Mucosa of descending colon (tissue), 3 donors: ENCODE measurements at regions of chr5 and their contacts with region 1.

Region 1: GRCh38 chr5:90932052-90932699 is 373.6 kb downstream of the ADGRV1 start:
- DNase-seq: peak in 1 of 3 donors; percentile 78
- ATAC-seq: peak; percentile 81
- H3K4me3 ChIP-seq: no peak overlapping the region
- H3K4me1 ChIP-seq: no peaks in the 10 kb centered on the region
- CTCF ChIP-seq: peak; percentile 29

Region 2: GRCh38 chr5:91024727-91025126 is 92.6 kb after region 1 on chr5:
- intact Hi-C with region 1: loop called in 1 of 2 experiments (anchors 10 kb)
- DNase-seq: no peak
- ATAC-seq: no peak
- H3K4me3 ChIP-seq: no peak overlapping the region
- H3K4me1 ChIP-seq: peaks cover 18% of the 10 kb centered on the region
- CTCF ChIP-seq: no peak

Region 3: GRCh38 chr5:91101600-91102379 is 169.6 kb after region 1 on chr5:
- intact Hi-C with region 1: loop called in 1 of 2 experiments (anchors 5 kb)
- DNase-seq: peak; percentile 54 to 80 (median 67)
- ATAC-seq: peak; percentile 95
- H3K4me3 ChIP-seq: no peak overlapping the region
- H3K4me1 ChIP-seq: peaks cover 9% of the 10 kb centered on the region
- CTCF ChIP-seq: peak; percentile 46